Brain microvascular endothelial cell (primary cell): ENCODE measurements at regions of chr10 and their contacts with region 1.

Region 1: GRCh38 chr10:59181668-59182067 is 5.2 kb downstream of the PHYHIPL start:
- DNase-seq: peak; percentile 65
- H3K4me3 ChIP-seq: no peak overlapping the region
- H3K27ac ChIP-seq: no peak overlapping the region
- H3K27me3 ChIP-seq: peaks cover 5% of the 10 kb centered on the region
- CTCF ChIP-seq: peak; percentile 70

Region 2: DNA sequence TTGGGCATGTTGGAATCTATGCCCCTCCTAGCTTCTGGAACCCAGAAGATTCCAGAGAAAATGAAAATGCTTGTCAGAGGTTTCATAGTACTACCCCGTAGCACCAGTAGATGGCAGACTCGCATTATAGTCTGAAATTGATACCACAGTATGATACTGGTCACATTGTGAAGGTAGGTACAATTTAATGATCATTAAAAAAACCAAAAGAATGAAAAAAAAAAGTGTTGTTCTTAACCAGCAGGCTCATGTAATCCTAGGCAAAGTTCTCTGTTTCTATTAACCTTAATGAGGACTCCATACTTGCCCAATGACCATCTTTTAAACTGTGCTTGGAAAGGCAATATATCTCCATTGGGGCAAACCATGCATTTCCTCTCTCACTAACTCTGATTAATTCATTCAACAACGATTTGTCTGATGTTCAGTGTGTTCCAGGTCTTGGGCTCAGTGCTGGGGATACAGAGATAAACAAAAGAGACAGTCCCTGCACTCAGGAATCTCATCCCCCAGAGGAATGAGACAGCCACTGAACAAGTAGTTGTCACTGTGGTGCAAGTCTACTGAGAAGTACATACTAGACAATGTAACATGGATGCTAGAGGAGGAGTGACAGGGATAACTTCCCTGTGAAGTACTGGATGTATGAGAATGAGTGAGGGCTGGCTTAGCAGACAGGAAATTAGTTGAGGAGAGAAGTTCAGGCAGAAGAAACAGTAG is 228.8 kb before region 1 on chr10:
- in situ Hi-C with region 1: loop called (anchors 25 kb)
- DNase-seq: peak; percentile 66
- H3K4me3 ChIP-seq: no peak overlapping the region
- H3K27ac ChIP-seq: no peak overlapping the region
- H3K27me3 ChIP-seq: no peaks in the 10 kb centered on the region
- CTCF ChIP-seq: peak; percentile 74